ENCODE measurements at regions of chr2 and their contacts with region 1.

Region 1: DNA sequence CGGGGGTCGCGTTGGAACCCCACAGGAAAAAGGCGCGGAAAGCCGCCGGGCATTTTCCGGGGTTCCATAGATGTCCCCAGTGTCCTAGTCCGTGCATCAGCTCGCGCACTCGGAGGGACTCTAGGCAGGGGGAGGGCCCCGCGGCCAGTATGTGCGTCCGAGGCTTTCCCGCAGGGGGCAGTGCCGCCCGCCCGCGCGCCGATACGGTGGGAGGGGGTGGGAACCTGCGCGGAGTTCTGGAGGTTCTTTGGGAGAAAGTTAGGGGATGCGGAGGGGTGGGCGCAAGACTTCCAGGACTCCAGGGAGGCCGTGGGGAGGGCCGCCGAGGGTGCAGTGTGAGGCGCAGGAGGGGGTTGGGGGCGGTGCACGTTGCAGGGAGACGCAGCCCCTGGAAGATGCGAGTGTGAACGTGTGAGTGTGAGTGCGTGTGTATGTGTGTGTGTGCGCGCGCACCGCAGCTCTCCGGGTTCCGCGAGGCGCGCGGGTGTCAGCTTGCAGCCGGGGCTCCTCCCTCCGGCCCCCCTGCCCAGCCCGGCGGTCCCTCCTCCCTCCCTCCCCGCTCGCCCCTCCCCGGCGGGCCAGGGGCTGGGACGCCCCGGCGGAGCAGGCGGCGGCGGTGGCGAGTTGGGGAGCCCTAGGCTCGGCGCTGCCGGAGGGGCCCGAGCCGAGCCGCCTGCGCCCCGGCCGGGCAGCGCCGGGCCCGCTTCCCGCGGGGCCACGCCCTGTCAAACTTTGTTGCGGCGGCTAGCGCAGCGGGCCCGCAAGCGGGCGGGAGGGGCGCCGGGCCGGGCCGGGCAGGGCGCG is at the start of gene TCF7L1:
- DNase-seq: peak; percentile 88
- ATAC-seq: peak; percentile 89
- H3K4me3 ChIP-seq: peak within 1 kb of the TSS; percentile 100
- H3K27ac ChIP-seq: peak within 1 kb of the TSS; percentile 95
- H3K4me1 ChIP-seq: peaks cover 10% of the 10 kb centered on the region
- H3K27me3 ChIP-seq: no peaks in the 10 kb centered on the region
- CTCF ChIP-seq: peak; percentile 91
- POLR2A ChIP-seq: 0 out of 2 replicates have a peak, but pooled peaks have one; percentile 12
- RAD21 ChIP-seq: peak; percentile 92
- total RNA-seq, gene TCF7L1: 0.72 and 1.1 TPM in 2 replicates

Region 2: GRCh38 chr2:85066874-85067351 is 66.1 kb before region 1 on chr2:
- CTCF ChIA-PET with region 1: interaction called, 4 read pairs
- POLR2A ChIA-PET with region 1: no interaction called
- dilution Hi-C with region 1: no loop called
- in situ Hi-C with region 1: no loop called
- intact Hi-C with region 1: loop called (anchors 1 kb)
- DNase-seq: peak; percentile 84
- ATAC-seq: peak; percentile 96
- H3K4me3 ChIP-seq: peak overlapping the region; percentile 27; the same call in 1 of the 2 replicates
- H3K27ac ChIP-seq: no peak overlapping the region
- H3K4me1 ChIP-seq: no peaks in the 10 kb centered on the region
- H3K27me3 ChIP-seq: peaks cover 6% of the 10 kb centered on the region; the same call in 1 of the 2 replicates
- CTCF ChIP-seq: peak; percentile 88
- POLR2A ChIP-seq: 0 out of 2 replicates have a peak, but pooled peaks have one; percentile 32
- RAD21 ChIP-seq: peak; percentile 92

Region 3: GRCh38 chr2:85162746-85163301 is 29.8 kb after region 1 on chr2:
- CTCF ChIA-PET with region 1: interaction called, 3 read pairs
- POLR2A ChIA-PET with region 1: no interaction called
- dilution Hi-C with region 1: no loop called
- in situ Hi-C with region 1: no loop called
- intact Hi-C with region 1: loop called (anchors 2 kb)
- DNase-seq: peak; percentile 83
- ATAC-seq: peak; percentile 89
- H3K4me3 ChIP-seq: no peak overlapping the region
- H3K27ac ChIP-seq: peak overlapping the region; percentile 22; the same call in 1 of the 2 replicates
- H3K4me1 ChIP-seq: peaks cover 25% of the 10 kb centered on the region
- H3K27me3 ChIP-seq: no peaks in the 10 kb centered on the region
- CTCF ChIP-seq: 0 out of 2 replicates have a peak, but pooled peaks have one; percentile 5
- POLR2A ChIP-seq: no peak
- RAD21 ChIP-seq: 0 out of 2 replicates have a peak, but pooled peaks have one; percentile 8

Region 4: GRCh38 chr2:85277416-85278158 is 144.6 kb after region 1 on chr2:
- CTCF ChIA-PET with region 1: interaction called, 10 read pairs
- POLR2A ChIA-PET with region 1: no interaction called
- dilution Hi-C with region 1: no loop called
- in situ Hi-C with region 1: no loop called
- intact Hi-C with region 1: no loop called
- DNase-seq: peak; percentile 89
- ATAC-seq: peak; percentile 89
- H3K4me3 ChIP-seq: no peak overlapping the region
- H3K27ac ChIP-seq: peak overlapping the region; percentile 87
- H3K4me1 ChIP-seq: peaks cover 36% of the 10 kb centered on the region
- H3K27me3 ChIP-seq: no peaks in the 10 kb centered on the region
- CTCF ChIP-seq: no peak
- POLR2A ChIP-seq: no peak
- RAD21 ChIP-seq: no peak

Region 5: GRCh38 chr2:85288244-85288725 is 155.2 kb after region 1 on chr2:
- CTCF ChIA-PET with region 1: interaction called, 14 read pairs
- POLR2A ChIA-PET with region 1: no interaction called
- dilution Hi-C with region 1: no loop called
- in situ Hi-C with region 1: loop called (anchors 5 kb)
- intact Hi-C with region 1: loop called (anchors 1 kb)
- DNase-seq: peak; percentile 78
- ATAC-seq: peak; percentile 86
- H3K4me3 ChIP-seq: no peak overlapping the region
- H3K27ac ChIP-seq: no peak overlapping the region
- H3K4me1 ChIP-seq: peaks cover 4% of the 10 kb centered on the region; the same call in 1 of the 2 replicates
- H3K27me3 ChIP-seq: no peaks in the 10 kb centered on the region
- CTCF ChIP-seq: no peak
- POLR2A ChIP-seq: no peak
- RAD21 ChIP-seq: no peak

Region 6: GRCh38 chr2:85302121-85302520 is 169.1 kb after region 1 on chr2:
- CTCF ChIA-PET with region 1: interaction called, 3 read pairs
- POLR2A ChIA-PET with region 1: no interaction called
- dilution Hi-C with region 1: no loop called
- in situ Hi-C with region 1: no loop called
- intact Hi-C with region 1: loop called (anchors 1 kb)
- DNase-seq: peak; percentile 2
- ATAC-seq: no peak
- H3K4me3 ChIP-seq: no peak overlapping the region
- H3K27ac ChIP-seq: no peak overlapping the region
- H3K4me1 ChIP-seq: no peaks in the 10 kb centered on the region
- H3K27me3 ChIP-seq: no peaks in the 10 kb centered on the region
- CTCF ChIP-seq: no peak
- POLR2A ChIP-seq: no peak
- RAD21 ChIP-seq: no peak

Region 7: GRCh38 chr2:85437488-85438284 is 304.6 kb after region 1 on chr2:
- CTCF ChIA-PET with region 1: no interaction called
- POLR2A ChIA-PET with region 1: no interaction called
- dilution Hi-C with region 1: no loop called
- in situ Hi-C with region 1: no loop called
- intact Hi-C with region 1: no loop called
- DNase-seq: peak; percentile 77
- ATAC-seq: peak; percentile 63
- H3K4me3 ChIP-seq: peak overlapping the region; percentile 29; the same call in 1 of the 2 replicates
- H3K27ac ChIP-seq: peak overlapping the region; percentile 79
- H3K4me1 ChIP-seq: peaks cover 29% of the 10 kb centered on the region
- H3K27me3 ChIP-seq: no peaks in the 10 kb centered on the region
- CTCF ChIP-seq: no peak
- POLR2A ChIP-seq: peak; percentile 78
- RAD21 ChIP-seq: no peak

Measured in IMR-90 (cell line).